OCI-LY7 (cell line): ENCODE measurements at regions of chr6 and their contacts with region 1.

Region 1: GRCh38 chr6:119454714-119455113 is 105.2 kb upstream of the MAN1A1 start:
- DNase-seq: no peak
- H3K4me3 ChIP-seq: peak overlapping the region; percentile 10
- H3K27ac ChIP-seq: no peak overlapping the region
- H3K4me1 ChIP-seq: peaks cover 47% of the 10 kb centered on the region
- CTCF ChIP-seq: no peak

Region 2: GRCh38 chr6:119442776-119443184 is 11.9 kb before region 1 on chr6:
- CTCF ChIA-PET with region 1: interaction called, 6 read pairs
- POLR2A ChIA-PET with region 1: interaction called, 13 read pairs
- intact Hi-C with region 1: no loop called
- DNase-seq: peak; percentile 99
- H3K4me3 ChIP-seq: peak overlapping the region; percentile 25
- H3K27ac ChIP-seq: peak overlapping the region; percentile 94
- H3K4me1 ChIP-seq: peaks cover 76% of the 10 kb centered on the region
- CTCF ChIP-seq: no peak